Gastrocnemius medialis (tissue), 4 donors: ENCODE measurements at regions of chr9 and their contacts with region 1.

Region 1: DNA sequence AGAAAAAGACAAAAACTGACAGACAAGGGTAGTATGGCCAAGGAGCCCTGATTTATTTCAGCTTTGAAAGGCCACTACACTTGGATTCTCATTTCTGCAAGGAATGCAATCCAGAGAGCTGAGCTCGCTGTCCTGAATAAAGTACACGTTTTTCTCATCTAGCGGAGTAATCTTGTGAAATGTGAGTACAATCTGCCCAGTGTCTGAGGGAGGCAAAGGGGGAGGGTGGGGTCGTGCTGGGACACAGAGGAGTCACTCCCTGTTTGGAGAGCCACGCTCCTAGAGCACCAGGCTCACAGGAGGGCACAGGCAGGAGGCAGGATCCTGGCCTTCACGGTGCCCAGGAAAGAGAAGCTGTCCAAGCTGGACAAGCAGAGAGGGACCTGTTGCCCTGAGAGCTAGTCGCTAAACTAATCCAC is 51.0 kb upstream of the IFNK start:
- DNase-seq: peak; percentile 50 to 72
- ATAC-seq: peak; percentile 80 to 91
- H3K4me3 ChIP-seq: no peak overlapping the region
- H3K27ac ChIP-seq: peak overlapping the region; percentile 19 to 59 (median 52)
- H3K4me1 ChIP-seq: peaks cover 25 to 30% of the 10 kb centered on the region in 2 donors
- H3K27me3 ChIP-seq: no peaks in the 10 kb centered on the region
- CTCF ChIP-seq: no peak
- POLR2A ChIP-seq: no peak

Region 2: GRCh38 chr9:27427273-27427645 is 45.9 kb before region 1 on chr9:
- in situ Hi-C with region 1: loop called in 1 of 4 experiments (anchors 10 kb)
- intact Hi-C with region 1: no loop called
- DNase-seq: no peak
- ATAC-seq: peak in 1 of 2 donors; percentile 65
- H3K4me3 ChIP-seq: no peak overlapping the region
- H3K27ac ChIP-seq: no peak overlapping the region
- H3K4me1 ChIP-seq: peaks cover 10 to 11% of the 10 kb centered on the region in 2 donors
- H3K27me3 ChIP-seq: no peaks in the 10 kb centered on the region
- CTCF ChIP-seq: no peak
- POLR2A ChIP-seq: no peak